ENCODE measurements at regions of chr13 and their contacts with region 1.

Region 1: GRCh38 chr13:97109841-97110492 is 112.2 kb upstream of the MBNL2 start:
- DNase-seq: peak; percentile 77
- ATAC-seq: peak; percentile 97
- H3K4me3 Mint-ChIP-seq: no peak overlapping the region
- H3K27ac Mint-ChIP-seq: no peak overlapping the region
- H3K4me1 Mint-ChIP-seq: peaks cover 11% of the 10 kb centered on the region
- H3K27me3 Mint-ChIP-seq: peaks cover 12% of the 10 kb centered on the region
- CTCF ChIP-seq: peak; percentile 95

Region 2: DNA sequence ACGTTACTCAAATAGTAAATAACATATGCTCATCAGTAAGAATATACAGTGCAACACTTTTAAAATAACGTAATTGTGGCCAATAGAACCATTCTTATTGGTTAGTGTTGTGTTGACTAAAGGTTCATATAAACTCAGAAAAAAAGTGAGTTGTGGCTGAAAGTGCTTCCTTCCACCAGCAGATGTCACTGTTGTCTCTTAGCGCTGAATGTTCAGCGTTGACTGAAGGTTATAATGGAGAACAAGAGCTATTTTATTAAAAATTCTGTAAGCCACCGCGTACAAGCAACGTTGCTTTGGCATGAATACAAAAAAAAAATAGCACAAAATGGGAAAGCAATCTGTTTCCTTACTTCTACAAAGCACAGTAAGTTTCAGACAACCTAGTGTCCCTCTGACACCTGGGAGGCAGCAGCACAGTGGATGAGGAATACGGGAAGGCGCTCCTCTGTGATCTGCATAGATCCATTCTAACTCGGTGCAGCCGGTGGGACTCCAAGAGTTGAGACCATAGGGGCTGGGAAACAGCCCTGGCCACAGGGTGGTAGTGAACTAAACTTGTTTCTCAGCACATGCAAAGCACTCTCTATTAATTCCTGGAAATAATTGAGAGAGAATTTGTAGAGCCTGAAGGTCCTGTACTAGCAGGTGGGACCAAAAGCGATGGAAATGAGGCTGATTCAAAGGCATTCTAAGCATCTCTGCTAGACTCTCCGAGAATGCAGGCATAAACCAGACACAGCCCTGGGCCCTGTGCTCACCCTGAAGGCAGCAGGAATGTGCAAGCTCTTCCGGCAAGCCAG is 91.7 kb before region 1 on chr13:
- CTCF ChIA-PET with region 1: interaction called, 10 read pairs
- POLR2A ChIA-PET with region 1: no interaction called
- intact Hi-C with region 1: no loop called
- DNase-seq: peak; percentile 47
- ATAC-seq: peak; percentile 62
- H3K4me3 Mint-ChIP-seq: no peak overlapping the region
- H3K27ac Mint-ChIP-seq: no peak overlapping the region
- H3K4me1 Mint-ChIP-seq: peaks cover 5% of the 10 kb centered on the region
- H3K27me3 Mint-ChIP-seq: peaks cover 42% of the 10 kb centered on the region
- CTCF ChIP-seq: peak; percentile 90

Region 3: DNA sequence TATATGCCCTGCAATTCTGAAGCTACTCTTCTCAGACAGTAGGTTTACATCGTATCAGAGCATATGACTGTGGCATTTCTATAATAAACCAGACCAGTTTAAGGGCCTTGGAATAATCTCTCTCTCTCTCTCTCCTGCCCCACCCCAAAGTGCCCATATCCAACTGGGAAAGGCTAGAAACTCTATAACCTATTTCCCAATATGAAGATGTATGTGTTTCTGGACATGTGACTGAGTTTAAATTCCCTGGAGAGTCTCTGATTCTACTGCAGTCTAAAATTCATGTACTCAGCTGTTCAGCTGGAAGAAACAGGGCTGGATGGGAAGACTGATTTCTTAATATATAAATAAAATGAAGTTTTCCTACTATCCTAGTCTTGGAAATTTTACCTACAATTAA is 20.2 kb after region 1 on chr13:
- CTCF ChIA-PET with region 1: interaction called, 25 read pairs
- POLR2A ChIA-PET with region 1: no interaction called
- intact Hi-C with region 1: no loop called
- DNase-seq: no peak
- ATAC-seq: no peak
- H3K4me3 Mint-ChIP-seq: no peak overlapping the region
- H3K27ac Mint-ChIP-seq: no peak overlapping the region
- H3K4me1 Mint-ChIP-seq: peaks cover 17% of the 10 kb centered on the region
- H3K27me3 Mint-ChIP-seq: peaks cover 6% of the 10 kb centered on the region
- CTCF ChIP-seq: no peak

Region 4: GRCh38 chr13:97171136-97171535 is 61.2 kb after region 1 on chr13:
- CTCF ChIA-PET with region 1: interaction called, 15 read pairs
- POLR2A ChIA-PET with region 1: no interaction called
- intact Hi-C with region 1: no loop called
- DNase-seq: no peak
- ATAC-seq: no peak
- H3K4me3 Mint-ChIP-seq: no peak overlapping the region
- H3K27ac Mint-ChIP-seq: no peak overlapping the region
- H3K4me1 Mint-ChIP-seq: no peaks in the 10 kb centered on the region
- H3K27me3 Mint-ChIP-seq: no peaks in the 10 kb centered on the region
- CTCF ChIP-seq: no peak

Region 5: DNA sequence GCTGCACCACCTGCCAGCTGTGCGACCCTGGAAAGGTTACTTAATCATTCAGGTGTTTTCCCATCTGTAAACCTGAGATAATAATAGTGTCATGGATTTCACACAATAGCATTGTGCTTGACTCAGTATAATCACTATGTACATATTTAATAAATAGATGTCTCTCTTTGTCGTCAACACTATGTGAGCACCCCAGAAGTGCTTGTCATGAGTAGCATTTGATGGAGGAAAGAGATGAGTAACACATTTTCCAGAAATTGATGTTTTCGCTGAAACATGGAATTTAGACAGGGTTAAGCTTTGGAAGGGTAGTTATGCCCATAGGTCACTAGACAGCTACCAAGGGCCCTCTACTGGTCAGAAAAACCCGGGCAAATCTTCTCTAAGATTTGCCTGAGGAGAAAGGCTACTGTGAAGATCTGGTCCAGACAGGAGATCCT is 102.7 kb after region 1 on chr13:
- CTCF ChIA-PET with region 1: interaction called, 15 read pairs
- POLR2A ChIA-PET with region 1: no interaction called
- intact Hi-C with region 1: no loop called
- DNase-seq: no peak
- ATAC-seq: no peak
- H3K4me3 Mint-ChIP-seq: no peak overlapping the region
- H3K27ac Mint-ChIP-seq: no peak overlapping the region
- H3K4me1 Mint-ChIP-seq: peaks cover 41% of the 10 kb centered on the region
- H3K27me3 Mint-ChIP-seq: no peaks in the 10 kb centered on the region
- CTCF ChIP-seq: peak; percentile 17

Region 6: GRCh38 chr13:97295283-97296182 is 185.6 kb after region 1 on chr13:
- CTCF ChIA-PET with region 1: interaction called, 12 read pairs
- POLR2A ChIA-PET with region 1: no interaction called
- intact Hi-C with region 1: no loop called
- DNase-seq: no peak
- ATAC-seq: no peak
- H3K4me3 Mint-ChIP-seq: no peak overlapping the region
- H3K27ac Mint-ChIP-seq: no peak overlapping the region
- H3K4me1 Mint-ChIP-seq: peaks cover 34% of the 10 kb centered on the region
- H3K27me3 Mint-ChIP-seq: no peaks in the 10 kb centered on the region
- CTCF ChIP-seq: no peak

Region 7: DNA sequence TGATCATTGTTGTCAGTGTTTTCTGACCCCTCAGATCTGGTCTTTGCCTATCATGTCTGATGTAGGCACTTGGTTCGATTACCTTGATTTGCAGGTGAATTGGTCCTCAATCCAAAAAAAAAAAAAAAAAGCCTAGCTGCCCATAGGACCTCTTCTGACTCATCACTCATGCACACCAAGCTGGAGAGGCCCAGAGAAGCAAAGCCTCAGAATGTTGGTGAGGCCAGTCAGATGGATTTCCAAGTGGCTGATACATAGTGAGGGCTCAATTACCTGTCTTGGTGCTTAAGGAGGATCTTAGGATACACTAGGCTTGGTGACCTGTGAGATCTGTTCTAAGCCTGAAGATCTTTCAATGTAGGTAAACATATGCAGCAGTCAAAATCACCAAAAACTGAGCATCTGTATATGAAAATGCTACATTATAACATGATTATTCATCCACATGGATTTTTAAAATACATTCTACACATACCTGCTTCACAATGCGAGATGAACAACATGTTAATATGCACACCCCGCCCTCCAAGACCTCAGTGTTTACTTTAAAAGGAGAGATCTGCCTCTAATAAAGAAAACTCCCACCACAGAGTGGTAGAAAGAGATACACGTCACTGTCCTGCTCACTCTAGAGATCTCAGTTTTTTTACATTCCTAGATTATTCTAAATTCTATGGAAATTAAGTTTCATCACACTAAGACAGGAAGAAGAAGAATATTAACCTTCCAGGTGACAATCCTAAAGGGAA is 244.1 kb after region 1 on chr13:
- CTCF ChIA-PET with region 1: interaction called, 245 read pairs
- POLR2A ChIA-PET with region 1: no interaction called
- intact Hi-C with region 1: loop called (anchors 1 kb)
- DNase-seq: no peak
- ATAC-seq: no peak
- H3K4me3 Mint-ChIP-seq: no peak overlapping the region
- H3K27ac Mint-ChIP-seq: no peak overlapping the region
- H3K4me1 Mint-ChIP-seq: no peaks in the 10 kb centered on the region
- H3K27me3 Mint-ChIP-seq: no peaks in the 10 kb centered on the region
- CTCF ChIP-seq: no peak

Measured in activated CD8-positive, alpha-beta T cell treated with anti-CD3 and anti-CD28 coated beads for 36 hours (primary cell).